ENCODE measurements at regions of chr17 and their contacts with region 1.

Region 1: DNA sequence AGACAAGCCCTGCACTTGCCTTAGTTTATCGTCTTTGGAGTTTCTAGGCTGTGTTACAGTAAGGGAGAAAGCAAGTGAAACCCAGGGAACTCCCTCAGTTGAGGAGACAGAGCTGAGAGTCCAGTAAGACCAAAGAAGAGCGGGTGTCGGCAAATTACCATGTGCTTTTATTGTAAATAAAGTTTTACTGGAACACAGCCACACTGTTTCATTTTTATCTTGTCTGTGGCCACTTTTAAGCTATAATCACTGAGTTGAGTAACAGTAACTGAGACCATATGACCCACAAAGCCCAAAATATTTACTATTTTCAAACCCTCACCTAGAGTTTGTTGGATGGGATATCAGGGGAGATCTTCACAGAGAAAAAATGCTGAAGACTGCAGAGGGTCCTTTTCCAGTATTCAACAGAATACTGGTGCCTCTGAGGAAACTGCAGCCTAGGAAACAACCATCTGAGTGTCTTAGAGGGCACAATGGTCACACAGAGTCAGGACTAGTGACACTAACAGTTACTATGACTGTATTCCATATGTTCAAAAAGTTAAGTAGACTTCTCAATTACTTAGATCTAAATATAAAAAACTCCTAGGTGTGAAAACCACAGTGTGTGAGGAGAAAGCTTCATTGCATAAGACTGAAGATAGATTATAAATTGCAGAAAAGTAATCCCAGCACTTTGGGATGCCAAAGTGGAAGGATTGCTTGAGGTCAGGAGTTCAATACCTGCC is 351.1 kb upstream of the TBX2 start:
- DNase-seq: no peak
- ATAC-seq: no peak
- H3K4me3 ChIP-seq: no peak overlapping the region
- H3K27ac ChIP-seq: peak overlapping the region; percentile 6; the same call in 1 of the 2 replicates
- H3K4me1 ChIP-seq: no peaks in the 10 kb centered on the region; the same call in 1 of the 2 replicates
- H3K27me3 ChIP-seq: no peaks in the 10 kb centered on the region
- CTCF ChIP-seq: no peak

Region 2: DNA sequence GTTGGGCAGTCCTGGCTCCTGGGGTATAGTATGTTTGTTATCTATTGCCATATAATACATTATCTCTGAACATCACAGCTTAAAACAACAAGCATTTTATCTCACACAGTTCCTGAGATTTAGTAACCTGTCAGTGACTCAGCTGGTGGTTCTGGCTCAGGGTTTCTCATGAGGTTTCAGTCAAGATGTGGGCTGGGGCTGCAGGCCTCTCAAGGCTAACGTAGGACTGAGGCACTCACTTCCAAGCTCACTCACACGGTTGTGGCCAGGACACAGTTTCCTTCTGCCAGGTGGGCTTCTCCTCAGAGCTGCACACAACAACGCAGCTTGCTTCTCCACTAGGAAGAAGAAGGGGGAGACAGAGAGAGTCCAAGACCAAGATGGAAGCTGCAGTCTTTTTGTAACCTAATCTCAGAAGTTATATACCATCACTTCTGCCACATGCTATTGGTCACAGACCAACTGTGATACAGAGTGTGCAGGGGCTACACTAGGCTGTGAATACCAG is 1026.8 kb after region 1 on chr17:
- CTCF ChIA-PET with region 1: no interaction called
- POLR2A ChIA-PET with region 1: interaction called, 18 read pairs
- in situ Hi-C with region 1: no loop called
- intact Hi-C with region 1: no loop called
- DNase-seq: no peak
- ATAC-seq: no peak
- H3K4me3 ChIP-seq: no peak overlapping the region
- H3K27ac ChIP-seq: no peak overlapping the region
- H3K4me1 ChIP-seq: no peaks in the 10 kb centered on the region
- H3K27me3 ChIP-seq: no peaks in the 10 kb centered on the region; the same call in 1 of the 2 replicates
- CTCF ChIP-seq: no peak